Sigmoid colon (tissue), 7 donors: ENCODE measurements at regions of chr9 and their contacts with region 1.

Region 1: DNA sequence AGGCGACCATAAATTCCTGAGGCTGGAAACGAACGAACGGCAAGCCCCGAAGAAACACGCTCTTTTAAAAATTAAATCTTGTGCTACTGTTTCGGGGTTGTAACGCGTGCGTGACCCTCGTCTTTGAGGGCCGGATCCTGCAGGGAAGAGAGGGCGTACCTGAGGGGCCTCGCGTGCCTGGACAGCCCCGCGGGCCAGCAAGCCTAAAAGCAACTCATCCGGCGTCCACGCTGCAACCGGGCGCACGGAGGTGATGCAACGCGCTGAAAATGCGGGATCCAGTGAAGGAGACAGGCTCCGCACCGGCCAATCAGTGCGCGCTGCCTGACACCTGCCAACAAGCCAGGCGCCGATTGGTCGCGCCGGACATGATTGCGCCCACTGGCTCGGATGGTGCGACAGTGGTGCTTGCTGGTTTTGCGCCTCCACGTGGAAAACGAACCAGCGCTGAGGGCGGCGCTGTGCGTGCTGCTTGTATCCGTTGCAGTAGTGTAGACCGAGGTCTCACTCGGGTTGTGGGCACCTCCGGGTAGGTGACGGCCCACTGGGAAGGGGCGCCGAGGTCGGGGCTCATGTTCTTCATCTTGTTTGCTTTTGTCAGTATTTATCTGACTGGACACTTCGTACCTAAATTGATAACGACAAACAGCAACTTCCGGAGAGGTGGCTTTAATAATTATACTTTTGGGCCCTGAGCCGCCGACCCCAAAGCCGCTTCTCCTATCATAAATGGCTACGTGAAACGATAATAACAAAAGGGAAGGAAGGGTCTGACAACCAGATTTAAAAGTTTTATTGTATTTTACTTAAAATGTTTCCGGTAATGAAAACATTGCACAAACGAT is at the start of gene IARS1:
- DNase-seq: peak; percentile 99
- H3K4me3 ChIP-seq: peak within 1 kb of the TSS; percentile 51 to 78 (median 64)
- H3K27ac ChIP-seq: peak within 1 kb of the TSS; percentile 72 to 79 (median 78)
- H3K4me1 ChIP-seq: peaks cover 0 to 28% (median 22%) of the 10 kb centered on the region in 4 donors
- H3K27me3 ChIP-seq: no peaks in the 10 kb centered on the region
- CTCF ChIP-seq: peak in 2 of 4 experiments; percentile 7 to 20
- EP300 ChIP-seq: no peak
- POLR2A ChIP-seq: peak; percentile 19
- total RNA-seq, gene IARS1: 61.4 to 62.4 (median 62.2) TPM

Region 2: DNA sequence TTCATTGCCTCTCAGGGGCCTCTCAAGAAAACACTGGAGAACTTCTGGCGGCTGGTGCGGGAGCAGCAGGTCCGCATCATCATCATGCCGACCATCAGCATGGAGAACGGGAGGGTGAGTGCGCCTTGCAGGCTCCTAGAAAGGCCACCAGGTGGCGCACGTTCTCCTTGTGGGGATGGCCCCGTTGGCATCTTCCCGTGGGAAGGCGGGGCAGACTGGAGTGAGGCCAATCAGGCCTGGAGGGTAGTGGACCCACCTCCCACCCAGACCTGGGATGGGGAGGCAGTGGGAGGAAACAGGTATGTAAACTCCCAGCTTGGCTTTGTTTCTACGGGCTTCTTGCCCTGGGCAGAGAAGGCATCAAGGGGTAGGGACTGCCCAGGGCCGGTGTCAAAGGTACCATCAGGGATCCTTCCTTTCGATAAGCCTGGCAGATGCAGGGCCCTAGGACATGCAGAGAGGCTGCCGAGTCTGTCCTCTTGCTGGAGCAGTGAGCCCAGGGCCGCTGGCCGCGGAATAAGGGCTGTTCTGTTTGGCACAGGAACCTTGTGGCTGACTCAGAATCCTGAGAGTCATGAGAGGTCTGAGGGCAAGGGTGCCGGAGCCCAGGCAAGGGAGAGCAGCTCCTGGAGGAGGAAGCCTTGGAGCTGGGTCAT is 159.6 kb before region 1 on chr9:
- intact Hi-C with region 1: loop called (anchors 2 kb)
- DNase-seq: peak; percentile 89
- H3K4me3 ChIP-seq: peak overlapping the region in 1 of 4 donors; percentile 13
- H3K27ac ChIP-seq: peak overlapping the region; percentile 5 to 34 (median 26)
- H3K4me1 ChIP-seq: peaks cover 0 to 11% (median 10%) of the 10 kb centered on the region in 4 donors
- H3K27me3 ChIP-seq: no peaks in the 10 kb centered on the region
- CTCF ChIP-seq: peak; percentile 55 to 97 (median 80)
- EP300 ChIP-seq: no peak
- POLR2A ChIP-seq: no peak